Naive thymus-derived CD4-positive, alpha-beta T cell (primary cell): ENCODE measurements at regions of chr20 and their contacts with region 1.

Region 1: DNA sequence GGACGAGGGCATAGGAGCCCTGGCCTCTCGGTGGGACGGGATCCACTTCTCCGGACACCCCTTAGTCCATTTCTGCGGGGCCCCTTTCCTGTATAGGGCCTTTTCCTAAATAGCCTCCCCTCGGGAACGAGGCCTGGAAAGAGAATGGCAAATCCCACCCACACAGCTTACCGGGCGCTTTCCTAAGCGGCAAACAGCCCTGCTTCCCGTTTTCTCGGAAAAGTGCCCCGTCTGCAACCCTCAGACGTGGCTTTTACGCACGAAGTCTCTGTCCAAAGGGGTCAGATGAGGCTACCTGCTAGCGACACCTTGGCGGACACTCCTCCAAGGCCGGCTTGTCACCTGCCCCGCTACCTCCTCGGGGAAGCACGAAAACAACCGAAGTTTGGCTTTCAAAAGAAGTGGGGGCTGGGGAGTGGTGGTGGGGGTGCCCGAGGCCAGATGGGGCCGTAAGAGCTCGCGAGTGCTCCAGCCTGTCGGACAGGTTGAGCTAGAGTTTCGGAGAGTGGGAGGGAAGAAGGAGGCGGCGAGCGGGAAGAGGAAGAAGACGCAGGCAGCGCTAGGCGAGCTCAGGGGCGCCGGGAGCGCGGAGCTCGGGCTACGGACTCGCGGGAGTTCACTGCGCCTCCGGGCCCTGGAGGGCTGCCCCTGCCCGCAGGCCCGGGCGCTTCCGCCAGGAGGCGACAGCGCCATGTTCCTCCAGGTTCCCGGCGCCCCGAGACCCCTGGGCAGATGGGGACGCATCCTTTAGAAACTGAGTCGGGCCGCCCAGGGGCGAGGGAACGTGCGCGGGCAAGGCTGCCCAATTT is 768 bp downstream of the TFAP2C start:
- DNase-seq: no peak
- ATAC-seq: no peak
- H3K4me3 ChIP-seq: no peak overlapping the region
- H3K4me3 Mint-ChIP-seq: peak overlapping the region in 7 of 10 donors; percentile 9 to 73 (median 35)
- H3K27ac ChIP-seq: no peak overlapping the region
- H3K27ac Mint-ChIP-seq: no peak overlapping the region
- H3K4me1 ChIP-seq: no peaks in the 10 kb centered on the region
- H3K4me1 Mint-ChIP-seq: peaks cover 0 to 19% (median 11%) of the 10 kb centered on the region in 7 donors
- H3K27me3 ChIP-seq: peaks cover 0 to 7% of the 10 kb centered on the region in 2 donors
- H3K27me3 Mint-ChIP-seq: peaks cover 47 to 80% (median 56%) of the 10 kb centered on the region in 5 donors

Region 2: DNA sequence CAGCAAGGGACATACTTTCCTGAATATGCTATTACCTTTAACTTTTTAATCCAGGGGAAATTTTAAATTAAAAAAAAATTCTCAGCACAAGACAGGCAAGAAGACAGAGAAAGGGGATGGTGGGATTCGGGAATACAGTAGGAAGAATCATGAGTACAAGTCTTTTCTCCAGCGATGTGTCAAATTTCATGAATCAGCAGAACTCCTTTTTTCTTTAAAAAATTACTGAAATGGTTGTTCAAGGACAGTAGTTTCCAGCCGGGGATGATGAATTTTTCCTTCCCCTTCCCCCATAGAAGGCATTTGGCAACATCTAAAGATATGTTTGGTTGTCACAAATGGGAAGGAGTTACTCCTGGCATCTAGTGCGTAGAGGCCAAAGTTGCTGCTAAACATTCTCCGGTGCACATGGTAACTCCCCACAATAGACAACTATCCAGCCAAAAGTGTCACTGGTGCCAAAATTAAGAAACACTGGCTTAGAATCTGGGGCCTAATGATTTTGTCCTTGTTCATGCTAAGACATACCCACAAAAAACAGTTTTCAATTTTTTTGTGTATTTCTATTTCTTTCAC is 1074.7 kb before region 1 on chr20:
- CTCF ChIA-PET with region 1: no interaction called
- POLR2A ChIA-PET with region 1: no interaction called
- intact Hi-C with region 1: no loop called
- DNase-seq: no peak
- ATAC-seq: no peak
- H3K4me3 ChIP-seq: no peak overlapping the region
- H3K4me3 Mint-ChIP-seq: no peak overlapping the region
- H3K27ac ChIP-seq: no peak overlapping the region
- H3K27ac Mint-ChIP-seq: no peak overlapping the region
- H3K4me1 ChIP-seq: no peaks in the 10 kb centered on the region
- H3K4me1 Mint-ChIP-seq: no peaks in the 10 kb centered on the region
- H3K27me3 ChIP-seq: no peaks in the 10 kb centered on the region
- H3K27me3 Mint-ChIP-seq: no peaks in the 10 kb centered on the region

Region 3: DNA sequence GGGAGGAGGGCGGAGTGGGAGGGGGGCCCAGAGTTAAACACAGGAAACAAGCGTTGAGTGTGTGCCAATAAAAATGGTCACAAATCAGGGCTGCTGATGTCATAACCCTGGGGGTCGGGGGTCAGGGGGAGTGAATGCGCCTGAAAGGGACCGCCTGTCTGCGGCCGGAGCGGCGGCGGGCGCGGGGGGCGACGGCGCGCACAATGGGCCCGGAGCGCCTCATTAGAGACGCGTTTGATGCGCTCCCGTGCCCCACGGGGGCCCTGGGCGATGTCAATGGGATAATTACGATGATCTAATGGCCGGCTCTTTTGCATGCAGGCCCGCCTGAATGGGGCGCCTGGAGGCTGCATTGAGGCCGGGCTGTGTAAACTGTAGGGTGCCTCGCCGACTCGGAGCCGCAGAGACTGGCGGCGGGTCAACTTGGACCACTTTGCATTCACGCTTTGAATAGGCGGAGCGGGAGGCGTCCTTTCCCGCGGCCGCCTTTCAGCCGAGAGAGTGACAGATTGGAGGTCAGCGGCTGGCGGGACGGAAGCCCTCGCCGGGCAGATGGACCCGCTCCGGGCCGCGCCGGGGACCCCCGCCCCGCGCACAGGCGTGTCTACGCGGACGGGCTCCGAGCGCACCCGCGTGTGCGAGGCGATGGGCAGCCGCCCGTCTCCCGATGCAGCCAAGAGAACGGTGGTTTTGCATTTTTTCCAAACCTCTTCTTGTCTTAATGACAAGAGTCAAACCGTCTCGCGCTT is 295.4 kb after region 1 on chr20:
- CTCF ChIA-PET with region 1: no interaction called
- POLR2A ChIA-PET with region 1: no interaction called
- intact Hi-C with region 1: loop called in 1 of 2 experiments (anchors 5 kb)
- DNase-seq: no peak
- ATAC-seq: no peak
- H3K4me3 ChIP-seq: no peak overlapping the region
- H3K4me3 Mint-ChIP-seq: peak overlapping the region in 5 of 10 donors; percentile 29 to 51 (median 45)
- H3K27ac ChIP-seq: no peak overlapping the region
- H3K27ac Mint-ChIP-seq: no peak overlapping the region
- H3K4me1 ChIP-seq: no peaks in the 10 kb centered on the region
- H3K4me1 Mint-ChIP-seq: peaks cover 0 to 17% (median 6%) of the 10 kb centered on the region in 7 donors
- H3K27me3 ChIP-seq: peaks cover 0 to 3% of the 10 kb centered on the region in 2 donors
- H3K27me3 Mint-ChIP-seq: peaks cover 66 to 82% (median 74%) of the 10 kb centered on the region in 5 donors